ENCODE measurements at regions of chr7 and their contacts with region 1.

Region 1: DNA sequence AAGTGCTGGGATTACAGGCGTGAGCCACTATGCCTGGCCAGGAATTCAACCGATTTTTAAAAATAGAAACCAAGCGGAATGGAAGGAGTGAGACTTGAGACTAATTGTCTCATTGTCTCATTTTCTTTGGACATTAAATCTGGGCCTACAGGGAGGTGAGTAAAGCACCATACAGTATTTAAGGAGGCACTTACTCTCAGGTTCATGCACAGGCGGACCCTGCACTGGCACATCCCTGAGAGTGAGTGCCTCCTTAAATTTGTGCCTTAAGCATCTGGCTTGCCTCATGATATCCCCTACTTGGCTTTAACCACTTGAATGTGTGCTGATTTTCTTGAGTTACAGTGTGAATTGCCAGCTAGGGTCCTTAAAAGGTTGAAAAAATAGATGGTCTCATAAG is 10.6 kb downstream of the UBE3C start:
- DNase-seq: no peak
- ATAC-seq: no peak
- H3K4me3 Mint-ChIP-seq: no peak overlapping the region
- H3K27ac Mint-ChIP-seq: no peak overlapping the region
- H3K4me1 Mint-ChIP-seq: peaks cover 82% of the 10 kb centered on the region
- H3K27me3 Mint-ChIP-seq: no peaks in the 10 kb centered on the region

Region 2: GRCh38 chr7:157168571-157168970 is 19.3 kb after region 1 on chr7:
- CTCF ChIA-PET with region 1: interaction called, 3 read pairs
- POLR2A ChIA-PET with region 1: no interaction called
- intact Hi-C with region 1: loop called in 1 of 2 experiments (anchors 2 kb)
- DNase-seq: no peak
- ATAC-seq: no peak
- H3K4me3 Mint-ChIP-seq: no peak overlapping the region
- H3K27ac Mint-ChIP-seq: peak overlapping the region; percentile 64
- H3K4me1 Mint-ChIP-seq: no peaks in the 10 kb centered on the region
- H3K27me3 Mint-ChIP-seq: no peaks in the 10 kb centered on the region

Region 3: GRCh38 chr7:157309990-157310668 is 160.8 kb after region 1 on chr7:
- CTCF ChIA-PET with region 1: no interaction called
- POLR2A ChIA-PET with region 1: no interaction called
- intact Hi-C with region 1: no loop called
- DNase-seq: no peak
- ATAC-seq: peak; percentile 39
- H3K4me3 Mint-ChIP-seq: no peak overlapping the region
- H3K27ac Mint-ChIP-seq: peak overlapping the region; percentile 59
- H3K4me1 Mint-ChIP-seq: peaks cover 25% of the 10 kb centered on the region
- H3K27me3 Mint-ChIP-seq: no peaks in the 10 kb centered on the region

Measured in activated CD4-positive, alpha-beta T cell treated with anti-CD3 and anti-CD28 coated beads for 36 hours (primary cell).